CD4-positive, alpha-beta T cell (primary cell): ENCODE measurements at regions of chr1 and their contacts with region 1.

Region 1: DNA sequence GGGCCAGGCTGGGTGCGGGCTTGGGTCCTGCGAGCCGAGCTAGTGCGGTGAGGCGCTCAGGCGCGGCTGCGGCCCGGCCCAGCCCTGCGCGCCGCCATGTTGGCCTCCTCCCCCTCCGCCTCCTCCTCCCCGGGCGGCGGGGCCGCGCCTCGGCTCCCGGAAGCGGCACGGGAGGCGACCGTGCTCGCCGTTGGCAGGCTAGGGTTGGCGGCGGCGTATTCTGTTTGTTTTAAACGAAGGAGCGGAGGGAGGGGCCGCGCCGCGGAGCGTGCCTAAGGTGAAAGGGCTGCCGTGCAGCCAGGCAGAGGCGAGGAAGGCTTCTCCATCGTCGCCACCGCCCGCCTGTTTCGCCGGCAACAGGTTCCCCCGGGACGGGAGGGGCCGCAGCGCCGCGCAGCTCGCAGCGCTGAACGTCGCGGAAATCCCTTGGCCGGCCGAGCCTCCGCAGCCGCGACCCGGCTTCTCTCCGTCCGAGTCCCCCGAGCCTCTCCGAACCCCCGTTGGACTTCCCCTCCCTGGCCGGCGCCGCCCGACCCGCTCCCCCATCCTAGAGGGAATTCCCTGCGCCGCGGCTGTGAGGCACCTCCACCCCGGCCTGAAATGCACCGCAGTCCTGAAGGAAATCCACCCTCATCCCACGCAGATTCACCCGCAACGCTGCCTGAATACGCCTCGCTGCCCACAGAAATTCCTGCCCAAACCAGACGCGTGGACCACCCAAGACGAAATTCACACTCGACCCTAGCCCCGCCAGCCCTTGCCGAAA is at the start of gene USP24:
- DNase-seq: peak; percentile 74 to 94 (median 83)
- ATAC-seq: peak; percentile 81
- H3K4me3 ChIP-seq: peak within 1 kb of the TSS; percentile 86
- H3K4me3 Mint-ChIP-seq: peak within 1 kb of the TSS; percentile 95
- H3K27ac ChIP-seq: peak within 1 kb of the TSS; percentile 85 to 91
- H3K27ac Mint-ChIP-seq: peak within 1 kb of the TSS; percentile 89
- H3K4me1 ChIP-seq: peaks cover 38% of the 10 kb centered on the region
- H3K4me1 Mint-ChIP-seq: peaks cover 68% of the 10 kb centered on the region
- H3K27me3 ChIP-seq: no peaks in the 10 kb centered on the region
- H3K27me3 Mint-ChIP-seq: no peaks in the 10 kb centered on the region
- CTCF ChIP-seq: no peak
- total RNA-seq, gene USP24: 68.6 to 76.3 TPM

Region 2: DNA sequence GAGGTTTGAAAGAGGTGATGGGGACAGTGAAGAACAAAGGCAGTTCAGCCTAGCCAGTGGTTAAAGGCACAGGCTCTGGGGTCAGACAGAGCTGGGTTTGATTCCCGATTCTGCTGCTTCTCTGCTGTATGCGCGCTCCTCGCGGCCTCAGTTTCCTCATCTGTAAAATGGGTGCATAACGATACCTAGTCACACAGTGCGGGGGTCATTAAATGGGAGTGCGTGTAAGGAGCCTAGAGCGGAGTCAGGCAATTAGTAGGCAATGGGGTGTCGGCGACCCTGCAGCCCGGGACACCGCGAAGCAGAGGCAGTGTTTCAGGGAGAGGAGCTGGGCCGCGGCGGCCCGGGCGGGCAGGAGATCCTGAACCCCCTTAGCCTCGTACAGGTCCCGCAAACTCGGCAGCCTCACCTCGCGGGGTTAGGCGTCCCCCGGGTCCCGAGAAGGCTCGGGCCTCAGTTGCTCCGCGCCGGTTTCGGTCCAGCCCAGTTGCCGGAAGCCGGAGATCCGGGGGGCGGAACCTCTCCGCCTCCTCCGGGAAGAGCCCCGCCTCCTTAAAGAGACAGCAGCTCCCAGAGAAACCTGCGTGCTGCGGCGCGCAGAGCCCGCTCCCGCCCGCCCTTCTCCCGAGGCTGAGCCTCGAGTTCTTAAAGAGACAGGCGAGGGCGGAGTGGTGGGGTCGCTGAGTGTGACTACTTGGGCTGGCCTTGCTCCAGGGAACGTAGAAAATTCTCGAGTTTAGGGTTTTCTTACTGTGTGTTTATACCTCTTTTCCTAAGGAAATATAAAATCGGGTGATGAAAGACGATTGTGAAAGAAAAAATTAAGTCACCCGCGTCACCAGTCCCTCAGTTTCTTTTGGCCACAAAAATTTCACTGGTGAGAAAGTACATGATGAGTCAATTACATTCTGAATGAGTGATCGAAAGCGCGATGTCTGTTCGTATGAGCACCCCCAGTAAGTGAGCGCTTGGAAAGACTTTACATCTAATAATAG is 1325.8 kb before region 1 on chr1 and contains the start of gene YIPF1:
- CTCF ChIA-PET with region 1: no interaction called
- POLR2A ChIA-PET with region 1: no interaction called
- intact Hi-C with region 1: loop called in 1 of 2 experiments (anchors 5 kb)
- DNase-seq: peak; percentile 69 to 92 (median 84)
- ATAC-seq: peak; percentile 99
- H3K4me3 ChIP-seq: peak within 1 kb of the TSS; percentile 98
- H3K4me3 Mint-ChIP-seq: peak within 1 kb of the TSS; percentile 94
- H3K27ac ChIP-seq: peak within 1 kb of the TSS; percentile 29 to 45
- H3K27ac Mint-ChIP-seq: peak within 1 kb of the TSS; percentile 93
- H3K4me1 ChIP-seq: peaks cover 18% of the 10 kb centered on the region
- H3K4me1 Mint-ChIP-seq: peaks cover 44% of the 10 kb centered on the region
- H3K27me3 ChIP-seq: no peaks in the 10 kb centered on the region
- H3K27me3 Mint-ChIP-seq: no peaks in the 10 kb centered on the region
- CTCF ChIP-seq: no peak
- total RNA-seq, gene YIPF1: 4.3 to 5.5 TPM

Region 3: GRCh38 chr1:54013393-54014008 is 1201.9 kb before region 1 on chr1:
- CTCF ChIA-PET with region 1: no interaction called
- POLR2A ChIA-PET with region 1: no interaction called
- intact Hi-C with region 1: no loop called
- DNase-seq: no peak
- ATAC-seq: no peak
- H3K4me3 ChIP-seq: no peak overlapping the region
- H3K4me3 Mint-ChIP-seq: no peak overlapping the region
- H3K27ac ChIP-seq: no peak overlapping the region
- H3K27ac Mint-ChIP-seq: no peak overlapping the region
- H3K4me1 ChIP-seq: no peaks in the 10 kb centered on the region
- H3K4me1 Mint-ChIP-seq: no peaks in the 10 kb centered on the region
- H3K27me3 ChIP-seq: no peaks in the 10 kb centered on the region
- H3K27me3 Mint-ChIP-seq: no peaks in the 10 kb centered on the region
- CTCF ChIP-seq: no peak

Region 4: DNA sequence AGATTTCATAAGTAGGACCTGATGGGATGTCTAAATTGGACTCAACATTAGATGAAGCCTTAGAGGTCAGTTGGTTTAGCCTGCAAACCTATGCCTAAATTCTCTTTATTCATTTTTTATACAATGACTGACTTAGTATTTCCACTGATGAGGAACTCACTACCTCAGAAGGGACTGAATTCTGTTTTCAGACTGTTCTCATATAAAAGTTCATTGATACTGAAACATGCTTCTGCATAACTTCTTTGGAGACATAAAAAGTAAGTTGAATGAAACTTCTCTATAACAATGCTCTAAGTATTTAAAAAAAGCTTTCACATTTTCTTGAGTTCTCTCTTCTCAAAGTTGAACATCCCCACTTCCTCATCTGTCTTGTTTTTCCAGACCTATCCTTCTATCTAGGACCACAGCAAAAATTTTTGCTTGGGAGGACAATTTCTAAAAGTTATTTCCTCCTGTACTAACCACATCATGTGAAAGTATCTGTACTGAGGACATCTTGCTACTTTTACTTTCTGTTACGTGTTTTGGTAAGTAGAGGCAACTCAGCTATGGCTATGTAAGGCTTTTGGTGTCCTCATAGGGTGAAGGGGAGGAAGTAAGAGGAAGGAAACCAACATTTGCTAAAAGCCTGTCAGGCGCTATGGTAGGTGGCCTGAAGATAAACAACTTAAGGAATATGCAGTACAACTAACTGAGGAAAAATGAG is 64.4 kb before region 1 on chr1:
- CTCF ChIA-PET with region 1: no interaction called
- POLR2A ChIA-PET with region 1: interaction called, 8 read pairs
- intact Hi-C with region 1: loop called (anchors 5 kb)
- DNase-seq: peak in 3 of 14 experiments; percentile 42 to 84 (median 47)
- ATAC-seq: peak; percentile 87
- H3K4me3 ChIP-seq: peak overlapping the region; percentile 9
- H3K4me3 Mint-ChIP-seq: peak overlapping the region; percentile 35
- H3K27ac ChIP-seq: peak overlapping the region; percentile 17 to 75
- H3K27ac Mint-ChIP-seq: peak overlapping the region; percentile 88
- H3K4me1 ChIP-seq: peaks cover 9% of the 10 kb centered on the region
- H3K4me1 Mint-ChIP-seq: peaks cover 41% of the 10 kb centered on the region
- H3K27me3 ChIP-seq: no peaks in the 10 kb centered on the region
- H3K27me3 Mint-ChIP-seq: no peaks in the 10 kb centered on the region
- CTCF ChIP-seq: no peak

Region 5: GRCh38 chr1:55204997-55205396 is 10.4 kb before region 1 on chr1:
- CTCF ChIA-PET with region 1: no interaction called
- POLR2A ChIA-PET with region 1: interaction called, 16 read pairs
- intact Hi-C with region 1: loop called in 1 of 2 experiments (anchors 1 kb)
- DNase-seq: no peak
- ATAC-seq: no peak
- H3K4me3 ChIP-seq: no peak overlapping the region
- H3K4me3 Mint-ChIP-seq: no peak overlapping the region
- H3K27ac ChIP-seq: no peak overlapping the region
- H3K27ac Mint-ChIP-seq: peak overlapping the region; percentile 55
- H3K4me1 ChIP-seq: peaks cover 24% of the 10 kb centered on the region
- H3K4me1 Mint-ChIP-seq: peaks cover 84% of the 10 kb centered on the region
- H3K27me3 ChIP-seq: no peaks in the 10 kb centered on the region
- H3K27me3 Mint-ChIP-seq: no peaks in the 10 kb centered on the region
- CTCF ChIP-seq: no peak

Region 6: DNA sequence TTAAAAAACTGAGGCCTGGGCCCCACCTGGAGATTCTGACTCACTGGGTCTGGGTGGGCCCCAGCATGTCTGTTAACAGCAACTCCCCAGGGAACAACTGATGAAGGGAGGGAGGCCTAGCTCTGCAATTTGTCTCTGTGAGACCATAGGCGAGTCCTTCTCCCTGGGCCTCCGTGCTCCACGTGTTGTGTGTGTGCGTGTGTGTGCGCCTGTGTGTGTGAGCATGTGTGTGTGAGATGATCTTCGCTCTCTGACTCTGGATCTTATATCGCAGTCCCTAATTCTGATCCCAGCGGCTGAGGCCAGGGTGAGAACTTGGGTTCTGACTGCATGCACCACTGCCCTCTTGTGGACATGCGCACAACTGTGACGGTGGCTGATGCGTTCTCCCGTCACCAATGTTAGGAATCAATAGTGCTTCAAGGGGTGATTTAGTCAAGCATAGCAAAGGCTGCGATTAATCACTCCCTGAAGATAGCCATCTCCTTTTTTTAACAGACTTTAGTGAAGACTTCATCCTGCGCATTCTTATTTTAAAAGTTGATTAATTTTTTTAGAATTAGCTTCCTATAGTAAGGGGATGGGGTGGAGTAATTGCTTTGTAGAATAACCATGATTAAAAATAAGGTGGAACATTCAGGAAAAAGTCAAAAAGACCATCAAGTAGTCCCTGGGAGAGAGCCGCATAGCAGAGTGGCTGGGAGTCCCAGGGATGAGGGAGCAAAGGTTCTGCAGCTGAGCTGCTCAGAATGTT is 62.1 kb after region 1 on chr1:
- CTCF ChIA-PET with region 1: interaction called, 8 read pairs
- POLR2A ChIA-PET with region 1: interaction called, 5 read pairs
- intact Hi-C with region 1: loop called (anchors 2 to 5 kb)
- DNase-seq: peak; percentile 68 to 88 (median 74)
- ATAC-seq: peak; percentile 99
- H3K4me3 ChIP-seq: no peak overlapping the region
- H3K4me3 Mint-ChIP-seq: no peak overlapping the region
- H3K27ac ChIP-seq: no peak overlapping the region
- H3K27ac Mint-ChIP-seq: no peak overlapping the region
- H3K4me1 ChIP-seq: peaks cover 5% of the 10 kb centered on the region
- H3K4me1 Mint-ChIP-seq: peaks cover 5% of the 10 kb centered on the region
- H3K27me3 ChIP-seq: no peaks in the 10 kb centered on the region
- H3K27me3 Mint-ChIP-seq: no peaks in the 10 kb centered on the region
- CTCF ChIP-seq: peak; percentile 76